ENCODE measurements at regions of chr3 and their contacts with region 1.

Region 1: DNA sequence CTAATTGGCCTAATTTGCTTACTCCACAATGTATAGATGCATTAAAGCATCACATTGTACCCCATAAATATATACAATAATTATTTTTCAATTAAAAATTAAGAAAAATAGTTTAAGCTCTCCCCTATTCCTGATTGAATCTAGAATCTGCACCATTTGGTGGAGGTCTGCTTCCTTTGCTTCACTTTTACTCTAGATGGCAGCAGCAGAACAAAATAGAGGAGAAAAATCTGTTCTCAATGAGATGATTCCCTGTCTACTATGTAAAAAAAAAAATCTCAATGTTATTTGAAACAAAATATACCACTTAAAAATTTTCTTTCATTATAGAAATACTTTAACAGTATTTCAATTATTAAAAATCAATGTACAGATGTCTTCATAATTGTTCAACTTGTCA is 109.6 kb upstream of the FXR1 start:
- DNase-seq: no peak

Region 2: DNA sequence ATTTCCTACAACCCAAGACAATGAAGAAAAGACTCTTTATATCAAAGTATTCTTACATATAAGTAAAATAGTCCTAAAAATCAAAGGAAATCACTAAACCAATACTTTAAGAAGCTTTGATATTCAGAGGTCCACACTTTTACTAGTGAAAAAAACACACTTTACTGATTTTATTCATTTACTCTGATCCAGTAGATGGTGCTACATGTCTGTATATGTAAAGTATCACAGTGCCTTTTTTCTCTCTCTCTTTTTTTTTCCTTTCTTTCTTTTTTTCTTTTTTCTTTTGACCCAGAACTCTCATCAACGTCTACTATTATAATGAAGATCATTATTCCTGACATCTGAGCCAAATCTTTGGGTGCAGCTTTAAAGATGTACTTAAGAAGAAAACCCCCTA is 112.8 kb before region 1 on chr3:
- intact Hi-C with region 1: no loop called
- DNase-seq: no peak

Region 3: GRCh38 chr3:180855364-180855763 is 52.5 kb after region 1 on chr3:
- intact Hi-C with region 1: loop called (anchors 10 kb)
- DNase-seq: no peak

Region 4: GRCh38 chr3:181176601-181177000 is 373.8 kb after region 1 on chr3:
- intact Hi-C with region 1: loop called (anchors 2 kb)
- DNase-seq: peak; percentile 22 to 91 (median 70)

Region 5: GRCh38 chr3:182683453-182683852 is 1880.6 kb after region 1 on chr3:
- intact Hi-C with region 1: loop called (anchors 10 kb)
- DNase-seq: peak in 8 of 10 donors; percentile 36 to 92 (median 75)